Vagina (tissue), 2 donors: ENCODE measurements at regions of chr2 and their contacts with region 1.

Region 1: GRCh38 chr2:48107326-48107925 is 201.1 kb upstream of the FBXO11 start:
- DNase-seq: no peak
- H3K4me3 ChIP-seq: no peak overlapping the region
- H3K27ac ChIP-seq: peak overlapping the region; percentile 60
- H3K4me1 ChIP-seq: peaks cover 30% of the 10 kb centered on the region
- H3K27me3 ChIP-seq: no peaks in the 10 kb centered on the region
- CTCF ChIP-seq: no peak
- POLR2A ChIP-seq: no peak

Region 2: DNA sequence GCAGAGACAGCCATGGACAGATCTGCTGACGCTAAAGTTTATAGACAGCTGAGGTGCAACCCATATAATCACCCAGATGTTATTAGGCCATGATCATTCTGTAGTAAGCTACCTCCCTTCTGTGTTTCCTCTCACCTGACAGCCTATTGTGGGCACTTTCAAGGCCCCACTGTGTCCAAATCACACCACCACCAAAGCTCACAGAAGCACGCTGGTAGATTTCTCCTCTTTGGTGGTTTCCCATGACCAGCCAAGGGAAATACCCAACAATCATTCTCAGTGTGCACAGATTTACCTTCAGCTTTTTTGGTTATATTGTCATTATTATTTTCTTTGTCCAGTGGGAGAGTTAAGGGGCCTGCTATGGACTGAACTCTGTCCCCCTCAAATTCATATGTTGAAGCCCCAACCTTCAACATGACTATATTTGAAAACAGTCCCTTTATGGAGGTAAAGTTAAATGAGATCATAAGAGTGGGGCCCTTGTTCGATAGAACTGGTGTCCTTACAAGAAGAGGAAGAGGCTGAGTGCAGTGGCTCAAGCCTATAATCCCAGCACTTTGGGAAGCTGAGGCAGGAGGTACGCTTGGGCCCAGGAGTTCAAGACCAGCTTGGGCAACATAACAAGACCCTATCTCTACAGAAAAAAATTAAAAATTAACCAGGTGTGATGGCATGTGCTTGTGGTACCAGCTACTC is 398.5 kb before region 1 on chr2:
- intact Hi-C with region 1: no loop called
- DNase-seq: no peak
- H3K4me3 ChIP-seq: no peak overlapping the region
- H3K27ac ChIP-seq: no peak overlapping the region
- H3K4me1 ChIP-seq: no peaks in the 10 kb centered on the region
- H3K27me3 ChIP-seq: no peaks in the 10 kb centered on the region
- CTCF ChIP-seq: no peak
- POLR2A ChIP-seq: no peak

Region 3: GRCh38 chr2:47767880-47768609 is 339.4 kb before region 1 on chr2:
- intact Hi-C with region 1: loop called (anchors 10 kb)
- DNase-seq: no peak
- H3K4me3 ChIP-seq: no peak overlapping the region
- H3K27ac ChIP-seq: no peak overlapping the region
- H3K4me1 ChIP-seq: no peaks in the 10 kb centered on the region
- H3K27me3 ChIP-seq: no peaks in the 10 kb centered on the region
- CTCF ChIP-seq: peak; percentile 92 to 98 (median 93)
- POLR2A ChIP-seq: no peak

Region 4: GRCh38 chr2:47850198-47850597 is 257.2 kb before region 1 on chr2:
- intact Hi-C with region 1: loop called (anchors 10 kb)
- DNase-seq: no peak
- H3K4me3 ChIP-seq: no peak overlapping the region
- H3K27ac ChIP-seq: no peak overlapping the region
- H3K4me1 ChIP-seq: peaks cover 37% of the 10 kb centered on the region
- H3K27me3 ChIP-seq: no peaks in the 10 kb centered on the region
- CTCF ChIP-seq: no peak
- POLR2A ChIP-seq: no peak

Region 5: DNA sequence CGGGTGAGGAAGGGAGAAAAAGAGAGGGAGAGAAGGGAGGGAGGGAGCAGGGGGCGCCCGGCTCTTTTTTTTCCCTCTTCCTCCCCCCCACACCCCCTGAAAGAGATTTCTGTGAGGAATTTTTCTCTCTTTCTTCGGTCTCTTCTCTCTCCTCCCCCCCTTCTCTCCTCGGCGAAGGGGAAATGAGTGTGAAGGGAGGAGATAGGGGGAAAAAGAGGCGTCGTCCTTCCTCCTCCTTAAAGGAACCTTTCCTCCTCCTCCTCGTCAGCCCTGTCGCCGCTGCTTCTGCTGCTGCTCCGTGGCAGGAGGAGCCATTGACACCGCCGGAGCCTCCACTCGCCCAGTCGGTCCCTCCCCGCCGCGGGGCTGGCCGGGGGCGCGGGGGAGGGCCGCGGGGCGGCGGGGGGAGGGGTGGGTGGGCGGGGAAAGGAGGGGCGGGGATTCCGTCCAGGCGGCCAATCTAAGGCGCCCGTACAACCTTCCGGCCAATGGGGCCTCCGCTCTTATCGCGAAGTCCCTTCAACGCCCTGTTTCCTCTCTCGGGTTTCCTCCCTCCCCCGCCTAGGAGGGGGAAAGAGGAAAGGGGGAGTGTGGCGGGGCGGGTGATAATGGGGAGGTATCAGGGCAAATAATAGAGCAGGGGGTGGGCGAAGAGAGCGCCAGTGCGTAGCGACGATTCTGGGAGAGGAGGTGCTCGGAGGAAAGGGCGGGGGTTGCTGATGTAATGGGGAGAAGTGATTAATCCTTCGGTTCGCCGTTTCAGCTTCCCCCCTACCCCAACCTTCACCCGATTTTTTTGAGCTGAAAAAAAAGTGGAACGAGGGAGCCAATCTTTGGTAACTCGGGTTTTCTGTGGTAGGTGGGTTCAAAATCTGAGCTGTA is 201.0 kb before region 1 on chr2 and contains the start of gene FBXO11:
- intact Hi-C with region 1: loop called (anchors 5 kb)
- DNase-seq: peak in 1 of 2 donors; percentile 100
- H3K4me3 ChIP-seq: peak within 1 kb of the TSS; percentile 77 to 97
- H3K27ac ChIP-seq: peak within 1 kb of the TSS; percentile 99
- H3K4me1 ChIP-seq: peaks cover 28% of the 10 kb centered on the region
- H3K27me3 ChIP-seq: no peaks in the 10 kb centered on the region
- CTCF ChIP-seq: peak in 2 of 3 experiments; percentile 41 to 57
- POLR2A ChIP-seq: peak in 1 of 2 donors; percentile 89
- total RNA-seq, gene FBXO11: 35.8 TPM